Activated CD4-positive, alpha-beta memory T cell treated with anti-CD3 and anti-CD28 coated beads for 36 hours (primary cell): ENCODE measurements at regions of chr19 and their contacts with region 1.

Region 1: DNA sequence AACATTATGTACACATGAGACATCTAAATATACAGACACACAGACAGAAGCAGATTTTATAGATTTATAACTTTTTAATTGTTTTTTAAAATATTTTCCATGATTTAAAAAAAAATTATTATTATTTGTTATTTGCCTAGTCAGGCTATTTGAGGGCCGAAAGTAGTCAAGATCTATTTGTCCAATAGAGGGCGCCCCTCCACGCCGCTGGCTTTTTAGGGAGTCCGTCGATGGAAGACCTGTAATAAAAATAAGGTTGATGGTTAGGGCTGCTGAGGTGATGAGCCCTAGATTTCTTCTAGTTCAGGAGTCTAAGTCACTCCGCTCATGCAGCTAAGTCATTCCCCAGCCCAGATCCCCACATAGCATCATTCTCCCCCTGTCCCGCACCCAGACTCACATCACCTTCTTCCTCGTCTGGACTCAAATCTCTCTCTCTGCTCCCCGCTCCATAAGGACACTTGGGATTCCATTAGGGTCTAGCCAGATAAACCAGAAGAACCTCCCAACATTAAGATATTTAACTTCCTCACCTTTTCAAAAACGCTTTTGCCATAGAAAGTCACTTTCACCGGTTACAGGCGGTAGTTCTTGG is 33.9 kb upstream of the CEACAM21 start:
- DNase-seq: peak; percentile 88
- H3K4me3 Mint-ChIP-seq: peak overlapping the region; percentile 57
- H3K27ac Mint-ChIP-seq: peak overlapping the region; percentile 96
- H3K4me1 Mint-ChIP-seq: peaks cover 60% of the 10 kb centered on the region
- H3K27me3 Mint-ChIP-seq: no peaks in the 10 kb centered on the region

Region 2: GRCh38 chr19:40609561-40610395 is 932.3 kb before region 1 on chr19:
- CTCF ChIA-PET with region 1: no interaction called
- POLR2A ChIA-PET with region 1: interaction called, 3 read pairs
- intact Hi-C with region 1: loop called (anchors 10 kb)
- DNase-seq: peak; percentile 97
- H3K4me3 Mint-ChIP-seq: peak overlapping the region; percentile 72
- H3K27ac Mint-ChIP-seq: peak overlapping the region; percentile 84
- H3K4me1 Mint-ChIP-seq: peaks cover 61% of the 10 kb centered on the region
- H3K27me3 Mint-ChIP-seq: no peaks in the 10 kb centered on the region

Region 3: GRCh38 chr19:41439441-41440222 is 102.5 kb before region 1 on chr19 and contains the start of gene DMAC2:
- CTCF ChIA-PET with region 1: interaction called, 12 read pairs
- POLR2A ChIA-PET with region 1: no interaction called
- intact Hi-C with region 1: no loop called
- DNase-seq: peak; percentile 98
- H3K4me3 Mint-ChIP-seq: no peak within 1 kb of the TSS
- H3K27ac Mint-ChIP-seq: no peak within 1 kb of the TSS
- H3K4me1 Mint-ChIP-seq: peaks cover 15% of the 10 kb centered on the region
- H3K27me3 Mint-ChIP-seq: no peaks in the 10 kb centered on the region
- total RNA-seq, gene DMAC2: 47.5 to 47.8 TPM

Region 4: DNA sequence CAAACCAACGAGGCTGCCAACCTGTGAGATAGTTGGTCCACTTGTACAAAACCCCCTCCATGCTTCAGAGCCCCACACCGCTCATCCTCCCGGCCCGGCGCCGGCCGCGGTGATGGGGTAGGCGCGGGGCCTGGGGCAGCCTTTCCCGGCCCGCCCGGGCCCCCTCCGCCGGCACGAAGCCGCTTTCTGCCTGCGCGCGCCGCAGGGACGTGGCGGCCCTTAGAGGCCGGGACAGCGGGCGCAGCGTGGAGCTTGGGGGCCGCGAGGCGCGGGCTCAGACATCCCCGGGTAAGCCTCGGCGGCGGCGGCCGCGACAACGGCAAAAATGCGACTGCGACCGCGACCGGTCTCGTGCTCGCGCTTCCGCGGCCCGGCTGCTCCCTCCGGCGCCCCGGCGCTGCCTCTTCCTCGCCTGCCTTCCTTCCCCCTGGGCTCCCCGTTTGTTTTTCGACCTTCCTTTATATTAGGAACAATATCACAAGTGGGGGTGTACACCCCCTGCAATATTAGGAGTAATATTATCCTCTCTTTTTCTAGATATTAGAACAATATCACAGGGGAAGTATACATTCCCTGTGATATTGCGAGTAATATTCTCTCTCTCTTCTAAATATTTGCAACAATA is 20.0 kb before region 1 on chr19:
- CTCF ChIA-PET with region 1: interaction called, 6 read pairs
- POLR2A ChIA-PET with region 1: no interaction called
- intact Hi-C with region 1: loop called (anchors 1 kb)
- DNase-seq: peak; percentile 49
- H3K4me3 Mint-ChIP-seq: peak overlapping the region; percentile 67
- H3K27ac Mint-ChIP-seq: peak overlapping the region; percentile 67
- H3K4me1 Mint-ChIP-seq: peaks cover 25% of the 10 kb centered on the region
- H3K27me3 Mint-ChIP-seq: peaks cover 9% of the 10 kb centered on the region

Region 5: GRCh38 chr19:41554907-41555306 is 12.8 kb after region 1 on chr19:
- CTCF ChIA-PET with region 1: interaction called, 205 read pairs
- POLR2A ChIA-PET with region 1: interaction called, 10 read pairs
- intact Hi-C with region 1: loop called (anchors 1 kb)
- DNase-seq: no peak
- H3K4me3 Mint-ChIP-seq: peak overlapping the region; percentile 11
- H3K27ac Mint-ChIP-seq: peak overlapping the region; percentile 96
- H3K4me1 Mint-ChIP-seq: peaks cover 70% of the 10 kb centered on the region
- H3K27me3 Mint-ChIP-seq: no peaks in the 10 kb centered on the region

Region 6: GRCh38 chr19:41570639-41571112 is 28.6 kb after region 1 on chr19:
- CTCF ChIA-PET with region 1: interaction called, 60 read pairs
- POLR2A ChIA-PET with region 1: interaction called, 4 read pairs
- intact Hi-C with region 1: loop called (anchors 2 kb)
- DNase-seq: peak; percentile 90
- H3K4me3 Mint-ChIP-seq: no peak overlapping the region
- H3K27ac Mint-ChIP-seq: no peak overlapping the region
- H3K4me1 Mint-ChIP-seq: peaks cover 43% of the 10 kb centered on the region
- H3K27me3 Mint-ChIP-seq: no peaks in the 10 kb centered on the region